ENCODE measurements at regions of chr2 and their contacts with region 1.

Region 1: DNA sequence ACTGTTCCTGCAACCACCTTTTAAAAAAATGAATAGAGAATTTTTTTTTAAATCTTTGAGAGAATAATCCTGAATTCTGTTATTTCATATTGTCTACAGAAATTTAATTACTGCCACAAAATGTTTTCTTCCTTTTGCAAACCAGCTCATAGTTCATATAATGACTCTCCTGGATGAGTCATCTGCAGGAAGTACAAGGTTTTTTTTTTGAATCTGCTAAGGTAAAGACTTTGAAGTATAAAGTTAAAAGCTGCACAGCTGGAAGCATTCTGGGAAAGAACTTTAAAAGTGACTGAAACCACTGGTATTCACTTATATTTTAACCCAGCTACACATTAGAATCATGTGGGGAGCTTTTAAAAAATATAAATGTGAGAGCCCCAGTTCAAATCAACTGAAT is 25.4 kb downstream of the SESTD1 start:
- DNase-seq: peak; percentile 88
- ATAC-seq: peak; percentile 75
- H3K4me3 ChIP-seq: peak overlapping the region in 2 of 3 experiments; percentile 12 to 24; a peak in 2 of 6 replicates
- H3K27ac ChIP-seq: peak overlapping the region; percentile 55
- H3K4me1 ChIP-seq: peaks cover 90% of the 10 kb centered on the region
- H3K27me3 ChIP-seq: no peaks in the 10 kb centered on the region
- CTCF ChIP-seq: no peak
- EP300 ChIP-seq: peak in 1 of 2 experiments; percentile 95; a peak in 2 of 4 replicates
- POLR2A ChIP-seq: no peak
- RAD21 ChIP-seq: no peak

Region 2: GRCh38 chr2:179253226-179253625 is 14.0 kb after region 1 on chr2:
- CTCF ChIA-PET with region 1: no interaction called
- POLR2A ChIA-PET with region 1: interaction called, 4 read pairs
- in situ Hi-C with region 1: no loop called
- intact Hi-C with region 1: loop called (anchors 1 kb)
- DNase-seq: no peak
- ATAC-seq: no peak
- H3K4me3 ChIP-seq: no peak overlapping the region
- H3K27ac ChIP-seq: no peak overlapping the region
- H3K4me1 ChIP-seq: peaks cover 92% of the 10 kb centered on the region
- H3K27me3 ChIP-seq: no peaks in the 10 kb centered on the region
- CTCF ChIP-seq: no peak
- EP300 ChIP-seq: no peak
- POLR2A ChIP-seq: no peak
- RAD21 ChIP-seq: no peak

Region 3: DNA sequence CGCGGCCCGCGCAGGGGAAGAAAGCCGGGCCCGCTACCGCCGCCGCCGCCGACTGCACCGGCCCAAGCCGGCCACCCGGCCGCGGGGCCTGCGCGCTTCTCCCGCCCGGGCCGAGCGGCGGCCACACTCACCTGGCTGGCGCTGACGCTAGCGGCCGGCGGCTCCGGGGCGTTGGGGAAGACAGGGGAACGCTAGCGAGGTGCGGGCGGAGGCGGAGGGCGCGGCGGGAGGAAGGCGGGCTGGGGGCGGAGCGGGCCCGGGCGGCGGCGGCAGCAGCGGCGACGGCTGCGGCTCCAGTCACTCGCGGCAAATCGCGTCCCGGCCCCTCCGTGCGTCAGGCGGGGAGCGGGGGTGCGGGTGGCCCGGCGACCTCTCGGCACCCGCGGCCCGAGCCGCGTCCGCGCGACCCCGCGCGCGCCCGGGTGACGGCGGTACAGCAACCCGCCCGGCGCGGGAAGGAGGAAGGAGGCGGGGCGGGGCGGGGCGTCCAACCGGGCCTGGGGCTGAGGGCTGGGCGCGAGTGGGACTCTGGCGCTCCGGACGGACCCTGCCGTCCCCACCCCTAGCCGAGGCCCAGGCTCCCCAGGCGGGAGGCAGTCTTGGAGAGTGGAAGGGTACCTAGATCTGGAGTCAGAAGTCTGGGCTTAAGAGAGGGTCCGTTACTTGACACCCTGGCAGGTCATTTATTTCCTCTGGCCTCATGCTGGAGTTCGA is 25.3 kb after region 1 on chr2 and contains the start of gene SESTD1:
- CTCF ChIA-PET with region 1: no interaction called
- POLR2A ChIA-PET with region 1: interaction called, 21 read pairs
- in situ Hi-C with region 1: no loop called
- intact Hi-C with region 1: loop called (anchors 2 kb)
- DNase-seq: peak; percentile 68
- ATAC-seq: peak; percentile 86
- H3K4me3 ChIP-seq: peak within 1 kb of the TSS; percentile 86 to 98 (median 96)
- H3K27ac ChIP-seq: peak within 1 kb of the TSS; percentile 87
- H3K4me1 ChIP-seq: peaks cover 68% of the 10 kb centered on the region
- H3K27me3 ChIP-seq: no peaks in the 10 kb centered on the region; a peak in 1 of 5 replicates
- CTCF ChIP-seq: no peak
- EP300 ChIP-seq: peak in 1 of 2 experiments; percentile 9; a peak in 1 of 4 replicates
- POLR2A ChIP-seq: peak in 1 of 2 experiments; percentile 66; a peak in 3 of 4 replicates
- RAD21 ChIP-seq: 0 out of 2 replicates have a peak, but pooled peaks have one; percentile 36
- total RNA-seq, gene SESTD1: 74.4 and 105 TPM in 2 replicates

Region 4: DNA sequence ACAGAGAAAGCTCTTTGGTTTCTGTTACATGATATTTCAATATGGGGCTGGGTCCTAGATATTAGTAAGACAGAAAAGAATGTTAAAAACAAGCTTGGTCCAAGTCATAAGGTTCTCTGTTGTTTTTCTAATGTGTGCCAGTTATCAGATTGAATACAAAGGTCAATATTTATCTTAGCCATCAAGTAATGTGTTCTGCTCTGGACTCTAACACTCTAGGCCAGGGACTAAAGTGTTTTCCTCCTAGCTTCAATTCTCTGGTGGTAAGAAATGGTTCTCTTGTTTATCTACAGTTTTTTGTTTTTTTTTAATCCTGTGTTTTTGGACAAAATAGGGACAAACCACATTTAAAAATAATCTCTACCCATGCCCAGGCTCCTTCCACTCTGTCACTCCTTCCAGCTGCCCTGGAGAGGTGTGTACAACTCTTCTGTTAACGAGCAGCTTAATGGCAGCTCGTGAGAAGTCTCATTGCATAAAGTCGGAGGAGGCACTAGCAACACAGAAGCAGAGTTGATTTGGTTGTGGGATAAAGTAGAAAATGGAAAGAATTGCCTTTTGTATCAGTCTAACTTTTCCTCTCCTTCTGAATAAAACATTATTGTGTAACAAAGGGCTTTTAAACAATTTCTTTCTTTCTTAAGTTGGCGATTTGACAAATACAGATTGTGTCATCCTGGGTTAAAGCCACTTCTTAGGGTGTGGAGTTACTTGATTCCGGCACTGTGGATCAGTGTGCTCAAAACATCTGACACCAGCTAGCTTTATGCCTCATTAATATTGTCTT is 33.4 kb after region 1 on chr2:
- CTCF ChIA-PET with region 1: no interaction called
- POLR2A ChIA-PET with region 1: interaction called, 24 read pairs
- in situ Hi-C with region 1: no loop called
- intact Hi-C with region 1: no loop called
- DNase-seq: peak; percentile 96
- ATAC-seq: peak; percentile 84
- H3K4me3 ChIP-seq: peak overlapping the region; percentile 9 to 52 (median 52); a peak in 4 of 6 replicates
- H3K27ac ChIP-seq: peak overlapping the region; percentile 93
- H3K4me1 ChIP-seq: peaks cover 90% of the 10 kb centered on the region
- H3K27me3 ChIP-seq: no peaks in the 10 kb centered on the region
- CTCF ChIP-seq: no peak
- EP300 ChIP-seq: peak in 1 of 2 experiments; percentile 96; a peak in 2 of 4 replicates
- POLR2A ChIP-seq: no peak
- RAD21 ChIP-seq: no peak